CD4-positive, alpha-beta T cell (primary cell): ENCODE measurements at regions of chr1 and their contacts with region 1.

Region 1: GRCh38 chr1:40161125-40161887 is at the start of gene RLF:
- DNase-seq: peak; percentile 88 to 98 (median 93)
- ATAC-seq: peak; percentile 93
- H3K4me3 ChIP-seq: peak within 1 kb of the TSS; percentile 98
- H3K4me3 Mint-ChIP-seq: no peak within 1 kb of the TSS
- H3K27ac ChIP-seq: peak within 1 kb of the TSS; percentile 87 to 99
- H3K27ac Mint-ChIP-seq: no peak within 1 kb of the TSS
- H3K4me1 ChIP-seq: peaks cover 19% of the 10 kb centered on the region
- H3K4me1 Mint-ChIP-seq: peaks cover 8% of the 10 kb centered on the region
- H3K27me3 ChIP-seq: no peaks in the 10 kb centered on the region
- H3K27me3 Mint-ChIP-seq: no peaks in the 10 kb centered on the region
- CTCF ChIP-seq: no peak
- total RNA-seq, gene RLF: 42.7 to 44.8 TPM

Region 2: DNA sequence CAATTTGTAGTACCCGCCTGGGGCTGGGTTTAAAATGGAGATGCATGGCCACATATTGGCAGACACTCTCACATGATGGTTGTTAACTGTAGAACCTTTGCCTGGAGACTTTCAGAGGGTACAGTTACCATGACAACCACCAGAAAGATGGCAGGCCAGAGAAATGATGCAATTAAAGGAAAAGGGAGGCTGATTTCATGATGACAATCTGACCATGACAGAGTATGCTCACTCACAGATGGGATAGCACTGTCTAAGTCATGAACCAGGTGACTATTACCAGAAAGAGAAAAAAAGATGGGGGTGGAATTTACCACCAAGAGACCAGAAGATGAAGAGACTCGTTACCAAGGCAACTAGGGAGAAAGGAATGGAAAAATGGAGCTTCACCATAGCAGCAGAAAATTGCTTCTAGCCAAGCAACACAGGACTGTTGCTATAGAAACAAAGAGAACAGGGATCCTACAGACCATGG is 274.5 kb before region 1 on chr1:
- CTCF ChIA-PET with region 1: no interaction called
- POLR2A ChIA-PET with region 1: no interaction called
- intact Hi-C with region 1: loop called in 1 of 2 experiments (anchors 5 kb)
- DNase-seq: no peak
- ATAC-seq: no peak
- H3K4me3 ChIP-seq: no peak overlapping the region
- H3K4me3 Mint-ChIP-seq: no peak overlapping the region
- H3K27ac ChIP-seq: no peak overlapping the region
- H3K27ac Mint-ChIP-seq: no peak overlapping the region
- H3K4me1 ChIP-seq: peaks cover 16% of the 10 kb centered on the region
- H3K4me1 Mint-ChIP-seq: peaks cover 18% of the 10 kb centered on the region
- H3K27me3 ChIP-seq: peaks cover 2 to 4% of the 10 kb centered on the region in 2 experiments
- H3K27me3 Mint-ChIP-seq: peaks cover 9% of the 10 kb centered on the region
- CTCF ChIP-seq: no peak

Region 3: DNA sequence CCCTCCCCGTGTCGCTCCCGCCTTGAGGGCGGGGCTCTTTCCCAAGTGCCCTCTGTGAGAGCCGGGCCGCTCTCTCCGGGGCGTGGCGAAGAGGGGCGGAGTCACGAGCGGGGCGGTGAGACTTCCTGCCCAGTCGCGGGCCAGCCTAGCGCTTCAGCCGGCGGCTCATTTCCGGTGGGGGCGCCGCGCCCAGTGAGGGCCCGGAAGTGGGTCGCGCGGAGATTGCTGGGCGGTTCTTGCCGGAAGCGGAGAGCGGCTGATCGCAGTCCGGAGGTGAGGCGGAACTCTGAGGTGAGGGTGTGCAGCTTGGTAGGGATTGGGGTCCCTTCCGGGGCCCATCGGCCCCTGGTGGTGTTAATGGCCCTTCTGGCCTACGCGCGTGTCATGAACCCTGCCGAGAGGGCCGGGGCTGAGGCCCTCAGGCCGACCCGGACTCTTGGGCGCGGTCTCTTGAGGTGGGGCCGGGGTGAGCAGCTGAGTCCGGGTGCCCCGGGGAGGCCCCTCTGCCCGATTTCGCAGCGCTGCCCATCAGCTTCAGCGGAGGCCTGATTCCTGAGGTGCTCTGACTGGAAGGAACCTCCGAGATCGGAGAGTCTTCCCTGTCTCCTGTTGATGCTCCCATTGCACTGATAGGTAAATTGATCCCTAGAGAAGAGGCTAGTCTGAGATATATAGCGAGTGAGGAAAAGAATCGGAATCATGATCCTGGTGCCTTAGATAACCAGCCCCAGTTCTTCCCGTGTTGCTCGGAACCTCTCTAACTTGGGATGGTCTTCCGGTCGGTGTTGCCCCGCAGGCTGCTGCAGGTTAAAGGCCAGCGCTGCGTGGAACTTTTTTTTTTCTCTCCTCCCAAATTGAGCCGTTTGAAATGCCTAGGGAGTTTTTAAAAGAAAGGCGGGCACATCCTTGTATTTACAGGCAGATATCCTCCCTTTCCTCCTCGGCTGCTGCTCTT is 120.5 kb before region 1 on chr1 and contains the start of gene CAP1:
- CTCF ChIA-PET with region 1: no interaction called
- POLR2A ChIA-PET with region 1: no interaction called
- intact Hi-C with region 1: loop called in 1 of 2 experiments (anchors 2 kb)
- DNase-seq: peak; percentile 99 to 100 (median 100)
- ATAC-seq: peak; percentile 88
- H3K4me3 ChIP-seq: peak within 1 kb of the TSS; percentile 100
- H3K4me3 Mint-ChIP-seq: peak within 1 kb of the TSS; percentile 98
- H3K27ac ChIP-seq: peak within 1 kb of the TSS; percentile 88 to 93
- H3K27ac Mint-ChIP-seq: peak within 1 kb of the TSS; percentile 95
- H3K4me1 ChIP-seq: peaks cover 77% of the 10 kb centered on the region
- H3K4me1 Mint-ChIP-seq: peaks cover 83% of the 10 kb centered on the region
- H3K27me3 ChIP-seq: no peaks in the 10 kb centered on the region
- H3K27me3 Mint-ChIP-seq: no peaks in the 10 kb centered on the region
- CTCF ChIP-seq: no peak
- total RNA-seq, gene CAP1: 121 to 126 TPM

Region 4: DNA sequence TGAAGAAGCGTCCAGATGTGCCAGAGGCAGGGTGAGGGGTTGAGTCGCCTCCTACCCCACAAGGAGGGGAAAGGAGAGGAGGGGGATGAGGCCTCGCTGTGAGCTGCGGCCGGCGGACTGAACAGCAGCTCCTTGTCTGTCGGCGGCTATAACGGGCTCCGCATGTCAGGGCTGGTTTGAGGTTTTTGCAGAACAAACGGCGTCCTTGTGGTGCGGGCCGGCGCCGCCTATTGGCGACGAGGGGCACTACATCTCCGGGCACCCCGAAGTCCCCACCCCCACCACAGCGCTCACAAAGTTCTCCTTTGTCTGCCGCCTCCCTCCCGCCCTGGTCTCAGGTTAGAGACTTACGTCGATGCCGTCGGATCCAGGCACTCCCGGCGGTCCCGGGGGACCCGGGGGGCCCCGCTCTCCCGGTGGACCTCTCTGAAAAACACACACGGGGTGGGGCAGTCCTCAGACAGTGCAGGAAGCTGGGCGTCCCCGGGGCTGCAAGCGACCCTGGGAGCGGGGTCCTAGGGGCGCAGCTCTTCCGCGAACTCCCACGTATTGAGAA is 154.0 kb after region 1 on chr1:
- CTCF ChIA-PET with region 1: no interaction called
- POLR2A ChIA-PET with region 1: no interaction called
- intact Hi-C with region 1: loop called (anchors 1 to 5 kb)
- DNase-seq: peak; percentile 78 to 94 (median 84)
- ATAC-seq: peak; percentile 84
- H3K4me3 ChIP-seq: peak overlapping the region; percentile 77
- H3K4me3 Mint-ChIP-seq: peak overlapping the region; percentile 90
- H3K27ac ChIP-seq: no peak overlapping the region
- H3K27ac Mint-ChIP-seq: peak overlapping the region; percentile 64
- H3K4me1 ChIP-seq: peaks cover 51% of the 10 kb centered on the region
- H3K4me1 Mint-ChIP-seq: peaks cover 37% of the 10 kb centered on the region
- H3K27me3 ChIP-seq: peaks cover 0 to 11% of the 10 kb centered on the region in 2 experiments
- H3K27me3 Mint-ChIP-seq: peaks cover 24% of the 10 kb centered on the region
- CTCF ChIP-seq: peak; percentile 79

Region 5: GRCh38 chr1:40411294-40411693 is 250.0 kb after region 1 on chr1:
- CTCF ChIA-PET with region 1: no interaction called
- POLR2A ChIA-PET with region 1: no interaction called
- intact Hi-C with region 1: no loop called
- DNase-seq: no peak
- ATAC-seq: no peak
- H3K4me3 ChIP-seq: no peak overlapping the region
- H3K4me3 Mint-ChIP-seq: no peak overlapping the region
- H3K27ac ChIP-seq: no peak overlapping the region
- H3K27ac Mint-ChIP-seq: peak overlapping the region; percentile 38
- H3K4me1 ChIP-seq: no peaks in the 10 kb centered on the region
- H3K4me1 Mint-ChIP-seq: peaks cover 42% of the 10 kb centered on the region
- H3K27me3 ChIP-seq: no peaks in the 10 kb centered on the region
- H3K27me3 Mint-ChIP-seq: no peaks in the 10 kb centered on the region
- CTCF ChIP-seq: no peak